ENCODE measurements at regions of chr14 and their contacts with region 1.

Region 1: GRCh38 chr14:75906676-75907280 is 75.0 kb downstream of the TGFB3 start:
- DNase-seq: peak; percentile 35 to 37
- ATAC-seq: peak in 1 of 2 donors; percentile 41
- H3K4me3 ChIP-seq: no peak overlapping the region
- H3K27ac ChIP-seq: peak overlapping the region; percentile 55 to 81 (median 70)
- H3K4me1 ChIP-seq: peaks cover 29 to 44% of the 10 kb centered on the region in 2 donors
- H3K27me3 ChIP-seq: no peaks in the 10 kb centered on the region
- CTCF ChIP-seq: peak; percentile 79 to 91 (median 88)
- POLR2A ChIP-seq: no peak

Region 2: DNA sequence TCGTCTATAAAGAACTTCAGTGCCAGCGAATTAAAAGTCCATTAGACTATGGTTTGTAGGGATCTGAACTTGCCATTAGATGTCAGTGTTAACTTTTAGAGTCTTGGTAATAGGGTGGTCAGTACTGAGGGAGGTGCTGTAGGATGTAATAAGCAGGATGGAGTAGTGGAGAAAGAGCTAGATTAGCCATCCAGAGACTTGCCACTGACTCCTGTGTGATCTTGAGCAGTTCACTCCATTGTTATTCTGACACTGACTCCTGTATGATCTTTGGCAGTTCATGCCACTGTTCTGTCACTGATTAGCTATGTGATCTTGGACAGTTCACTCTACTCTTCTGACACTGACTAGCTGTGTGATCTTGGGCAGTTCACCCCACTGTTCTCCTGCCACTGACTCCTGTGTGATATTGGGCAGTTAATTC is 112.2 kb before region 1 on chr14:
- in situ Hi-C with region 1: no loop called
- intact Hi-C with region 1: loop called (anchors 5 kb)
- DNase-seq: no peak
- ATAC-seq: peak; percentile 58 to 89
- H3K4me3 ChIP-seq: no peak overlapping the region
- H3K27ac ChIP-seq: no peak overlapping the region
- H3K4me1 ChIP-seq: no peaks in the 10 kb centered on the region
- H3K27me3 ChIP-seq: no peaks in the 10 kb centered on the region
- CTCF ChIP-seq: peak in 1 of 5 experiments; percentile 15
- POLR2A ChIP-seq: no peak

Region 3: DNA sequence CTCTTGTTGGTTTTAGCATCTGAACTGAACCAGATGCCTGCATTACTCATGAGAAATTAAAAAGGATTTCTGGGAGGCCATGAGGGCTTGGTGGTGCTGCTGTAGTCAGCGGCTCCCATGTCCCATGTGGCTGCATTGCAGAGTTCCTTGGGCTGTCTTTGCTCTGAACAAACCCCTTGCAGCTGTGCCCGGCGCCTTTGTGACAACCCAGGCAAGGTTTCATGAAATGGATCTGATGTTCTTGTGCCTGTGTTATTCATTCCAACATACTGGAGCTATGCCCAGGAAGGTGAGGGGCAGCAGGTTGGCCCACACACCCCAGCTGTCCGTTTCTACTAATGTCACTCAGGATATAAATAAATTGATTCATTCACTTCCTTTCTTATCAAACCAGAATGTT is 34.3 kb after region 1 on chr14:
- in situ Hi-C with region 1: no loop called
- intact Hi-C with region 1: loop called (anchors 5 kb)
- DNase-seq: peak; percentile 88 to 95
- ATAC-seq: peak; percentile 97 to 98
- H3K4me3 ChIP-seq: no peak overlapping the region
- H3K27ac ChIP-seq: peak overlapping the region; percentile 77 to 83 (median 80)
- H3K4me1 ChIP-seq: peaks cover 5 to 18% of the 10 kb centered on the region in 2 donors
- H3K27me3 ChIP-seq: no peaks in the 10 kb centered on the region
- CTCF ChIP-seq: no peak
- POLR2A ChIP-seq: peak; percentile 50 to 64

Region 4: DNA sequence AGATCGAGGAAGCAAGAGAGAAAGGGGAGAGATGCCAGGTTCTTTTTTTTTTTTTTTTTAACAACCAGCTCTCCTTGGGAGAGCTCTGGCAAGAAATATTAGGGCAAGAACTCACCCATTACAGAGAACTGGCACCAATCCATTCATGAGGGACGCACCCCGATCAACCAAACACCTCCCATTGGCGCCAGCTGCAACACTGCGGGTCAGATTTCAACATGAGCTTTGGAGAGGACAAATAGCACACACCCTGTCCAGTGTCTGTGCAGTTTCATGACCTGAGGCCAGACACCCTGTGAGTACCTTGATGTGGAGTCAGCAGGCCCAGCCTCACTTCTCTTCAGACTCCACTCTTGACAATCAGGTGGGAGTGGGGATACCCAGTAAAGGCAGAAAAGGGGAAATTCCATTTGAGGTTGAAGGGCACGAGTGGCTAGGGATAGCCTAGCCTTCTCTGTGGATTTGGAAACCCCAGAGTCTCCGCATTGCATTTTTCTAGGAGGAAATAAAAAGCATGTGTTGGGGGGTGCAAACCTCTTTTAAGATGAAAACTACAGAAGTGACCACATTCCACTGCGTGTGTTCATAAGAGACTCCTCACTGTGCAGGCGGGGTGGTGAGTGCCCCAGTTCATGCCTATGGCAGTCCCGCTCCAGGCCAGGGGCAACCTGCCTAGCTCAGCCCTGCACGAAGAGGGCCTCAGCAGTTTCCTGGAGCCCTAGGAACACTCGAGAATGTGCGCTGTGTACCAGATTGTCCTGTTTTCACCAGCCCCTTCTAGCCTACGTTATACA is 202.5 kb after region 1 on chr14:
- in situ Hi-C with region 1: no loop called
- intact Hi-C with region 1: no loop called
- DNase-seq: peak; percentile 52 to 73
- ATAC-seq: peak; percentile 92 to 94
- H3K4me3 ChIP-seq: no peak overlapping the region
- H3K27ac ChIP-seq: no peak overlapping the region
- H3K4me1 ChIP-seq: peaks cover 5 to 9% of the 10 kb centered on the region in 2 donors
- H3K27me3 ChIP-seq: no peaks in the 10 kb centered on the region
- CTCF ChIP-seq: no peak
- POLR2A ChIP-seq: no peak

Measured in gastrocnemius medialis (tissue), 4 donors.